ENCODE measurements at regions of chr18 and their contacts with region 1.

Region 1: DNA sequence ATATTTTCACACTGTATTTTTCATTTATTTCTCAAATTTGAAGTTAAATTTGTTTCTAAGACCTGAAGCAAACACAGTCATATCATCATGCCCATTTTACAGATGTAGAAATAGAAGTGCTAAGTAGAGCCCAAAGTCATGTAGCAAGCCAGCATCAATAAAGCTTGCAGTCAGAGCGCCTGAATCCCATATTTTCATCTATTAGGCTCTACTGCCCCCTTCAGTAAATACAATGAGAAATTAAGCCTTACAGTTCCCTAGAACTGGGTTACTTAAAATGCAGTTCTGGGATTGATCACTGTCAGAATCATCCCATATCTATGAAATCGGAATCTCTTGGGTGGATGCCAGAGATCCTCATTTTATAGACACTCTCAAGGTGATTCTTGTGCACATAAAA is 419.9 kb downstream of the TGIF1 start:
- H3K4me3 Mint-ChIP-seq: no peak overlapping the region
- H3K27ac Mint-ChIP-seq: no peak overlapping the region
- H3K4me1 Mint-ChIP-seq: peaks cover 30% of the 10 kb centered on the region
- H3K27me3 Mint-ChIP-seq: no peaks in the 10 kb centered on the region

Region 2: DNA sequence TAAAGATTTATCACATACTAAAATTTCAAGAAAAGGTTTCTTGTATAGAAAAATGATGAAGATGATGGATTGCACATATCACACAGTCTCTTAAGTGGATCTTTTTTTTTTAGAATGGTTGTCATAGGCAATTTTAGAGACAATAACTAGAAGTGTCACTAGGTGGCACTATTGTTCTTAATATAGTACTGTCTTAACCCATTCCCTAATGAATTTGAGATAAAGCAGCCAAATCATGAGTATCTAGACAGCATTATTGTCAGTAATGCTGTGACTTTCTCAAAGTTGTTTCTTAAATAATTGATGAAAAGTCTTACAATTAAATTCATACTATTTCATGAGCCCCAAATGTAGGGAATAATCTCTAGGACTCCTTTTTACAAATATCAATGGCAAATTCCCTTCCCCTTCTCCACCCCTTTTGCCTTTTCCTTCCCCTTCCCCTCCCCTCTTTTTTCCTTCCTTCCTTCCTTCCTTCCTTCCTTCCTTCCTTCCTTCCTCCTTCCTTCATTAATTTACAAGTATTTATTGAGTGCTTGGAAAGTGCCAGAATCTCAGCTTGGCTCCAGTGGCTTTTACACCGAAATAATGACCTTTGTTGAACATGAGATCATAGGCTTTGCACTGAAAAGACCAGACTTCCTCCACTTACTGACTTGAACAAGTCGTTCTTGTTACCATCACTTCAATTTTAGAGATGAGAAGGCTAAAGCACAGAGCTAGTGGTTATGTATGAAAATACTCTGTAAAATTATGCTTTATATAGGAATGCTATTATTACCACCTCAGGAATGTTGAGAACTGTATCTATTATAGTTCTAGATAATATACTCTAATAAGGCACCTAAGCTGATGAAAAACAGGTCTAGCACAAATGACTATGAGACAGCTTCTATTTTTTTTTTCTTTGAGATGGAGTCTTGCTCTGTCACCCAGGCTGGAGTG is 588.1 kb before region 1 on chr18:
- intact Hi-C with region 1: loop called (anchors 5 kb)
- H3K4me3 Mint-ChIP-seq: no peak overlapping the region
- H3K27ac Mint-ChIP-seq: no peak overlapping the region
- H3K4me1 Mint-ChIP-seq: peaks cover 27% of the 10 kb centered on the region
- H3K27me3 Mint-ChIP-seq: no peaks in the 10 kb centered on the region

Region 3: DNA sequence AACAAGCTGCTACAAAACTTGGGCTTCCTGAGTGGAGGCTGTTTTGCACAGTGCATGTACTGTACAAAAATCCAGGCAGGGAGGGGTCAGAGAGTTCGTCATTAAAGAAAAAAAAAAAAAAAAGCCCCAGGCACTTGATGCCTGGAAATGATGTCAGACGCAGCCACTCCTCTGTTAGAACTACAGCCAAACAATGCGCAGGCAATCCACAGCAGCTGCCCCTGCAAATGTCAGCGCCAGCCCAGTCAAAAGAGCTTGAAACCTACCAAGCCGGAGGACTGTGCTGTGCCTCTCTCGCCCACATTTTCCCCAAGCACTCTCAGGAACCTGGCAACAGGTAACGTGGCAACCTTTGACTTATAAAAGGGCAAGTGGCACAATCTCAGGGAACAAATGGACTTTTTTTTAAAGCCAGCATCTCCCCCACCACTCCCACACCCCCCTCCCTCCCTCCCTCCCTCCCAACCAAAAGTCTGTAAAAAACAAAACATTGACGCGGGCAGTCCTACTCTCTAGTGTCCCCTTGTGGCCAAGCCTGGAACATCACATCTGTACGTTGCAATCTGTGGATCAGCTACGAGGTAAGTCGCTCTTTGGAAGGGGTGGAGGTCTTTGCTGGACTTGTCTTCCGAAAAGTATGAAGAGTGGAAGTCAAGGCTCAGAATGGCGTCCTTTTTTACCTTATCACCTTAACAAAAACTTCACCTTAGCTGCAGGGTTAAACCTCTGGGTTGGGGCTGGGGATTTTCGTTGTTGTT is 275.8 kb before region 1 on chr18:
- intact Hi-C with region 1: loop called (anchors 10 kb)
- H3K4me3 Mint-ChIP-seq: peak overlapping the region; percentile 75
- H3K27ac Mint-ChIP-seq: peak overlapping the region; percentile 99
- H3K4me1 Mint-ChIP-seq: peaks cover 44% of the 10 kb centered on the region
- H3K27me3 Mint-ChIP-seq: no peaks in the 10 kb centered on the region

Region 4: GRCh38 chr18:3703732-3704176 is 166.1 kb before region 1 on chr18:
- intact Hi-C with region 1: loop called (anchors 1 kb)
- H3K4me3 Mint-ChIP-seq: no peak overlapping the region
- H3K27ac Mint-ChIP-seq: peak overlapping the region; percentile 58
- H3K4me1 Mint-ChIP-seq: peaks cover 53% of the 10 kb centered on the region
- H3K27me3 Mint-ChIP-seq: peaks cover 4% of the 10 kb centered on the region

Region 5: GRCh38 chr18:3726238-3726951 is 143.5 kb before region 1 on chr18:
- intact Hi-C with region 1: no loop called
- H3K4me3 Mint-ChIP-seq: no peak overlapping the region
- H3K27ac Mint-ChIP-seq: peak overlapping the region; percentile 79
- H3K4me1 Mint-ChIP-seq: peaks cover 58% of the 10 kb centered on the region
- H3K27me3 Mint-ChIP-seq: peaks cover 1% of the 10 kb centered on the region

Region 6: GRCh38 chr18:3947383-3947782 is 77.5 kb after region 1 on chr18:
- intact Hi-C with region 1: no loop called
- H3K4me3 Mint-ChIP-seq: no peak overlapping the region
- H3K27ac Mint-ChIP-seq: no peak overlapping the region
- H3K4me1 Mint-ChIP-seq: no peaks in the 10 kb centered on the region
- H3K27me3 Mint-ChIP-seq: peaks cover 1% of the 10 kb centered on the region

Region 7: GRCh38 chr18:3995476-3996102 is 125.7 kb after region 1 on chr18:
- intact Hi-C with region 1: loop called (anchors 5 kb)
- H3K4me3 Mint-ChIP-seq: no peak overlapping the region
- H3K27ac Mint-ChIP-seq: no peak overlapping the region
- H3K4me1 Mint-ChIP-seq: no peaks in the 10 kb centered on the region
- H3K27me3 Mint-ChIP-seq: peaks cover 2% of the 10 kb centered on the region